HepG2 (cell line): ENCODE measurements at regions of chr20 and their contacts with region 1.

Region 1: GRCh38 chr20:62065669-62066338 is at the start of gene TAF4:
- DNase-seq: peak; percentile 59
- ATAC-seq: no peak
- H3K4me3 ChIP-seq: peak within 1 kb of the TSS; percentile 70 to 81 (median 73)
- H3K27ac ChIP-seq: peak within 1 kb of the TSS; percentile 84
- H3K4me1 ChIP-seq: peaks cover 66% of the 10 kb centered on the region
- H3K27me3 ChIP-seq: no peaks in the 10 kb centered on the region
- CTCF ChIP-seq: no peak
- EP300 ChIP-seq: 0 out of 4 replicates have a peak, but pooled peaks of 1 of the 2 experiments have one; percentile 22
- POLR2A ChIP-seq: peak; percentile 92 to 95
- RAD21 ChIP-seq: peak; percentile 59; the same call in 1 of the 2 replicates
- total RNA-seq, gene TAF4: 12.0 and 12.2 TPM in 2 replicates

Region 2: GRCh38 chr20:61560361-61560853 is 505.4 kb before region 1 on chr20:
- CTCF ChIA-PET with region 1: no interaction called
- POLR2A ChIA-PET with region 1: no interaction called
- in situ Hi-C with region 1: no loop called
- intact Hi-C with region 1: no loop called
- DNase-seq: no peak
- ATAC-seq: peak; percentile 37
- H3K4me3 ChIP-seq: no peak overlapping the region
- H3K27ac ChIP-seq: no peak overlapping the region
- H3K4me1 ChIP-seq: no peaks in the 10 kb centered on the region
- H3K27me3 ChIP-seq: peaks cover 7 to 48% of the 10 kb centered on the region in 2 experiments; a peak in 4 of 5 replicates
- CTCF ChIP-seq: peak; percentile 31; the same call in 1 of the 2 replicates
- EP300 ChIP-seq: no peak
- POLR2A ChIP-seq: no peak
- RAD21 ChIP-seq: no peak

Region 3: DNA sequence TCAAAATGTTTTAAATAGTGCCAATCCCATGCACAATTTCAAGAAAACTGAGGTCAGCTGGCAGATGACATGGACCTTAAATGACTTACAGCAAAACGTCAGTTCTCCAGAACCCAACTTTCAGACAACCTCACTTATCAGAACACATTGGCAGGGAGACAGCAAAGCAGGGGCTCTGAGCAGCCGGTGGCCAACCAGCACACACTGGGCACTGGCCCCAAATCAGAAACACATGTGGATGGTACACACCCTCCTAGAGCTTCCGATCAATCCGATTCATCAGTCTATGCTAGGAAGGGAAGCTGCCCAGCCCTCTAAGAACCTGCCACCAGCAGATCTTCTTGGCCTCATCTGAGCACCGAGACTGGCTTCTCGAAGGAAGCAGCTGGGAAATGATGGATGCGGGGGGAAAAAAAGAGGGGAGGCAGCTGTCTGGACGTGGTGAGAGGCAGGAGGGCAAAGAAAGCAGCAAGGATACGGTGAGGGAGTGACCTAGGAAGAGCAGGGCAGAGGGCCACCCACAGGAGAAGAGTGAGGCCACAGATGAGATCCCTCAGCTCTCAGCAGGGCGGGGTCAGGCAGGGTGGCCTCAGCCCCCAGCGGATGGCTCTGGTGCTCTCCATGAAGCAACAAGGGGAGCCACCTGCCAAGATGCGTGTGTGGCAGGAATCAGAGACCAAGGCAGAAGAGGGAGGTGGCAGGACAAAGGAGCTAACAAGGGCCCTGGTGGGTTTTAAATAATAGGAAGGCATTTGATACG is 33.0 kb before region 1 on chr20:
- CTCF ChIA-PET with region 1: no interaction called
- POLR2A ChIA-PET with region 1: interaction called, 10 read pairs
- in situ Hi-C with region 1: no loop called
- intact Hi-C with region 1: no loop called
- DNase-seq: no peak
- ATAC-seq: peak; percentile 23; the same call in 2 of the 3 replicates
- H3K4me3 ChIP-seq: no peak overlapping the region
- H3K27ac ChIP-seq: no peak overlapping the region
- H3K4me1 ChIP-seq: peaks cover 54% of the 10 kb centered on the region
- H3K27me3 ChIP-seq: no peaks in the 10 kb centered on the region
- CTCF ChIP-seq: no peak
- EP300 ChIP-seq: no peak
- POLR2A ChIP-seq: no peak
- RAD21 ChIP-seq: no peak

Region 4: DNA sequence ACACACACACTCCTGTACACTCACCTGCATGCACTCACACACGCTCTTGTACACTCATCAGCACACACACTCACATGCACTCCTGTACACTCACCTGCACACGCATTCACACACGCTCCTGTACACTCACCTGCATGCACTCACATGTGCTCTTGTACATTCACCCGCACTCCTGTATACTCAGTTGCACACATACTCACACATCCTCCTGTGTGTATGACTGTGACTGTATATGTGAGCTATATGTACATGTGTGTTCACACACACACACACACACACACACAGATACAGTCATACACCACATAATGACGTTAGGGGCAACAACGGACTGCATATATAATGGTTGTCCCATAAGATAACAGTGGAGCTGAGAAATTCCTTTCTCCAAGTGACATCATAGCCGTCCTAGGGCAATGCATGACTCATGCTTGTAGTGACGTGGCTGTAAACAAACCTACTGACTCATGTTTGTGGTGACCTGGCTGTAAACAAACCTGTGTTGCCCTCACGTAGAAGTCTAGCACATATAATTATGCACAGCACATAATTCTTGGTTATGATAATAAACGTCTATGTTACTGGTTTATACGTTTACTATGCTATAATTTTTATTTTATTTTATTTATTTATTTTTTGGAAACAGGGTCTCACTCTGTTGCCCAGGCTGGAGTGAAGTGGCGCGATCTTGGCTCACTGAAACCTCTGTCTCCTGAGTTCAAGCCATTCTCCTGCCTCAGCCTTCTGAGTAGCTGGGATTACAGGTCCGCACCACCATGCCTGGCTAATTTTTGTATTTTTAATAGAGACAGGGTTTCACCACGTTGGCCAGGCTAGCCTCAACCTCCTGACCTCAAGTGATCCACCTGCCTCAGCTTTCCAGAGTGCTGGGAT is 22.7 kb after region 1 on chr20:
- CTCF ChIA-PET with region 1: no interaction called
- POLR2A ChIA-PET with region 1: interaction called, 36 read pairs
- in situ Hi-C with region 1: no loop called
- intact Hi-C with region 1: no loop called
- DNase-seq: peak; percentile 80
- ATAC-seq: peak; percentile 40
- H3K4me3 ChIP-seq: no peak overlapping the region
- H3K27ac ChIP-seq: no peak overlapping the region
- H3K4me1 ChIP-seq: peaks cover 10% of the 10 kb centered on the region
- H3K27me3 ChIP-seq: peaks cover 13 to 46% of the 10 kb centered on the region in 2 experiments; a peak in 4 of 5 replicates
- CTCF ChIP-seq: no peak
- EP300 ChIP-seq: peak in 1 of 2 experiments; percentile 56; a peak in 1 of 4 replicates
- POLR2A ChIP-seq: no peak
- RAD21 ChIP-seq: no peak

Region 5: GRCh38 chr20:62121776-62122631 is 56.2 kb after region 1 on chr20 and contains the start of gene LSM14B:
- CTCF ChIA-PET with region 1: interaction called, 3 read pairs
- POLR2A ChIA-PET with region 1: interaction called, 260 read pairs
- in situ Hi-C with region 1: loop called (anchors 5 kb)
- intact Hi-C with region 1: loop called (anchors 1 kb)
- DNase-seq: peak; percentile 95
- ATAC-seq: peak; percentile 60
- H3K4me3 ChIP-seq: peak within 1 kb of the TSS; percentile 85 to 92 (median 87)
- H3K27ac ChIP-seq: peak within 1 kb of the TSS; percentile 86
- H3K4me1 ChIP-seq: peaks cover 63% of the 10 kb centered on the region
- H3K27me3 ChIP-seq: peaks cover 5 to 19% of the 10 kb centered on the region in 2 experiments; a peak in 4 of 5 replicates
- CTCF ChIP-seq: no peak
- EP300 ChIP-seq: peak; percentile 64 to 72; a peak in 3 of 4 replicates
- POLR2A ChIP-seq: peak in 1 of 2 experiments; percentile 68; a peak in 2 of 4 replicates
- RAD21 ChIP-seq: peak; percentile 75
- total RNA-seq, gene LSM14B: 77.7 and 79.2 TPM in 2 replicates

Region 6: GRCh38 chr20:62143118-62143973 is 77.5 kb after region 1 on chr20 and contains the starts of genes PSMA7 and SS18L1:
- CTCF ChIA-PET with region 1: no interaction called
- POLR2A ChIA-PET with region 1: interaction called, 43 read pairs
- in situ Hi-C with region 1: no loop called
- intact Hi-C with region 1: loop called (anchors 5 kb)
- DNase-seq: peak; percentile 84
- ATAC-seq: peak; percentile 71
- H3K4me3 ChIP-seq: peak within 1 kb of the TSS; percentile 87 to 93 (median 88)
- H3K27ac ChIP-seq: peak within 1 kb of the TSS; percentile 72
- H3K4me1 ChIP-seq: peaks cover 59% of the 10 kb centered on the region
- H3K27me3 ChIP-seq: no peaks in the 10 kb centered on the region; a peak in 1 of 5 replicates
- CTCF ChIP-seq: peak; percentile 22; the same call in 1 of the 2 replicates
- EP300 ChIP-seq: no peak
- POLR2A ChIP-seq: peak; percentile 74 to 93
- RAD21 ChIP-seq: peak; percentile 72
- total RNA-seq, gene PSMA7: 531 and 639 TPM in 2 replicates
- total RNA-seq, gene SS18L1: 15.3 and 17.8 TPM in 2 replicates